CD8-positive, alpha-beta T cell (primary cell): ENCODE measurements at regions of chr11 and their contacts with region 1.

Region 1: DNA sequence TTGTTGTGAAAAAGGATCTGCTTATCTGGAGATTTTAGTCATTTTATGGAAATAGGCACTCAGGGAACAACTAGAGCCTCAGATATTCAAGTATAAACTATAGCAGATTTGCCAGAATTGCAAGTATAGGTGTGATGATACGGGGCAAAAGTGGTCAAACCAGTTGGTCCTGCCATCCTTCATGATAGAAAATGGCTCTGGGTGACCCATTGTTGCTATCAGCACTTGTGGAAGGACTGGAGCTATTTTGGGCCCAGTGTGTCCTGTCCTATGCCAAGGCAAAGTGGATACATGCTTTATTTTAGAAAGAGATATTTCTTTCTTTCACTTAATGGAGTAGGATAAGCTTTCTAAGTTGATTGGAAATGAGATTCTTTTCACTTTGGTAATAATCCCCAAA is 85.2 kb downstream of the PPP6R3 start:
- DNase-seq: no peak
- ATAC-seq: no peak
- H3K4me3 ChIP-seq: no peak overlapping the region
- H3K4me3 Mint-ChIP-seq: no peak overlapping the region
- H3K27ac ChIP-seq: no peak overlapping the region
- H3K27ac Mint-ChIP-seq: peak overlapping the region; percentile 62
- H3K4me1 ChIP-seq: peaks cover 42% of the 10 kb centered on the region
- H3K4me1 Mint-ChIP-seq: peaks cover 81% of the 10 kb centered on the region
- H3K27me3 ChIP-seq: no peaks in the 10 kb centered on the region
- H3K27me3 Mint-ChIP-seq: no peaks in the 10 kb centered on the region
- CTCF ChIP-seq: no peak

Region 2: DNA sequence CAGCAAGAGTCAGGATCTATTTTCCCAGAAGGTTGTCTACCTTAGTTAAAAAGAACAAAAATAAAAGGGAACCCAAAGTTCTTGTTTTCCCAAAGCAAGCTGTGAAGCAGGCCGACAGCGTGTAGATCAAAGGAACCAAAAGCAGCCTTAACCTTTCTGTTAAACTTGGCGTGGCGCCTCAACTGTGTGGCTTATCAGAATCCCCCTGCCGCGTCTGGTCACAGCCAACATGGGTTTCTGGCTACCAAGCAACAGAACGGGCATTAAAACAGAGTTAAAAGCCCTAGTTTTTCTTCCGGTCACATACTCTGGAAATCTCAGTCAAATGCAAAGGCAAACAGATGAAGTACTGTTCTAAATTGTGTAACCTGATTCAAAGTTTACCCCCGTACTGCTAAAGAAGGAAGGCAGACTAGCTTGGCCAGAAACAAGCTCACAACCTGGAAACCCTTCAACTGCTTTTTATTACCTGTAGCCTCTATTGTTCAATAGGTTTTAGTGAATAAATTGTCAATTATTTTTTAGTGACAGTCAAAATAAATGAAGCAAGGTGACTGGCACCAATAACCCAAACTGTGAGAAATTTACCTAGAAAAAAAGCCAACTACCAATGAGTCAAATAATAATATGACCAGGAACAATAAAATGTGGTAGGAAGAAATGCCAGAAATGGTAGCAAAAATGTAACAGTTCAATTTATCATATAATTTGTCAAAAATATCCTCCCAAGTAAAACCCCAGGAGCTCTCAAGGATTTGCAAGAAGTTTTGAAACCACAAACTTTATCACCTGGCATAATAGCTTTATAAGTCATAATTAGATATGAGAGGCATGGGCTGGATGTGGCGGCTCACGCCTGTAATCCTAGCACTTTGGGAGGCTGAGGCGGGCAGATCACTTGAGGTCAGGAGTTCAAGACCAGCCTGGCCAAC is 446.1 kb before region 1 on chr11:
- CTCF ChIA-PET with region 1: no interaction called
- POLR2A ChIA-PET with region 1: no interaction called
- intact Hi-C with region 1: no loop called
- DNase-seq: peak in 8 of 9 experiments; percentile 11 to 75 (median 50)
- ATAC-seq: peak; percentile 66
- H3K4me3 ChIP-seq: peak overlapping the region in 1 of 2 experiments; percentile 19
- H3K4me3 Mint-ChIP-seq: peak overlapping the region; percentile 66
- H3K27ac ChIP-seq: peak overlapping the region in 1 of 2 experiments; percentile 11
- H3K27ac Mint-ChIP-seq: peak overlapping the region; percentile 86
- H3K4me1 ChIP-seq: peaks cover 13% of the 10 kb centered on the region
- H3K4me1 Mint-ChIP-seq: peaks cover 22% of the 10 kb centered on the region
- H3K27me3 ChIP-seq: no peaks in the 10 kb centered on the region
- H3K27me3 Mint-ChIP-seq: no peaks in the 10 kb centered on the region
- CTCF ChIP-seq: no peak

Region 3: DNA sequence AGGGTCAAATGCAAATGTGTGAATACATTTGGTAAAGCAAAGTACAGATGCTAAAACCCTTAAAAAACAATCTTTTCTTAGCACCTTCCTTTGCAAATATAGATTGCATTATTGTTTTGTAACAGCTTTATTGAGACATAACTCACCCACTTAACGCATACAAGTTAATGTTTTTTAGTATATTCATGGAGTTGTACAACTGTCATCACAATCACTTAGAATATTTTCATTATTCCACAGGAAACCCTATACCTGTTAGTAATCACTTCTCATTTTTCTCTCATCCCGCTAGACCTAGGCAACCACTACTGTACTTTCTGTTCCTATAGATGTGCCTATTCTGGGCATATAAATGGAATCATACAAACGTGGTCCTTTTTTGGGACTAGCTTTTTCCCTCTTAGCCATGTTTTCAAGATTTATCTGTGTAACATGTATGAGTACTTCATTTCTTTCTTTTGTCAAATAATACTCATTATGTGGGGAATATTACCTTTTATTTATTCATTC is 50.5 kb before region 1 on chr11:
- CTCF ChIA-PET with region 1: no interaction called
- POLR2A ChIA-PET with region 1: no interaction called
- intact Hi-C with region 1: no loop called
- DNase-seq: no peak
- ATAC-seq: no peak
- H3K4me3 ChIP-seq: no peak overlapping the region
- H3K4me3 Mint-ChIP-seq: no peak overlapping the region
- H3K27ac ChIP-seq: no peak overlapping the region
- H3K27ac Mint-ChIP-seq: peak overlapping the region; percentile 27
- H3K4me1 ChIP-seq: peaks cover 53% of the 10 kb centered on the region
- H3K4me1 Mint-ChIP-seq: peaks cover 86% of the 10 kb centered on the region
- H3K27me3 ChIP-seq: no peaks in the 10 kb centered on the region
- H3K27me3 Mint-ChIP-seq: no peaks in the 10 kb centered on the region
- CTCF ChIP-seq: no peak

Region 4: GRCh38 chr11:68565768-68566167 is 20.0 kb after region 1 on chr11:
- CTCF ChIA-PET with region 1: no interaction called
- POLR2A ChIA-PET with region 1: no interaction called
- intact Hi-C with region 1: loop called in 1 of 2 experiments (anchors 2 kb)
- DNase-seq: no peak
- ATAC-seq: no peak
- H3K4me3 ChIP-seq: no peak overlapping the region
- H3K4me3 Mint-ChIP-seq: no peak overlapping the region
- H3K27ac ChIP-seq: no peak overlapping the region
- H3K27ac Mint-ChIP-seq: peak overlapping the region; percentile 14
- H3K4me1 ChIP-seq: peaks cover 9% of the 10 kb centered on the region
- H3K4me1 Mint-ChIP-seq: peaks cover 31% of the 10 kb centered on the region
- H3K27me3 ChIP-seq: no peaks in the 10 kb centered on the region
- H3K27me3 Mint-ChIP-seq: no peaks in the 10 kb centered on the region
- CTCF ChIP-seq: no peak